Activated CD8-positive, alpha-beta T cell treated with anti-CD3 and anti-CD28 coated beads for 36 hours (primary cell): ENCODE measurements at regions of chr2 and their contacts with region 1.

Region 1: DNA sequence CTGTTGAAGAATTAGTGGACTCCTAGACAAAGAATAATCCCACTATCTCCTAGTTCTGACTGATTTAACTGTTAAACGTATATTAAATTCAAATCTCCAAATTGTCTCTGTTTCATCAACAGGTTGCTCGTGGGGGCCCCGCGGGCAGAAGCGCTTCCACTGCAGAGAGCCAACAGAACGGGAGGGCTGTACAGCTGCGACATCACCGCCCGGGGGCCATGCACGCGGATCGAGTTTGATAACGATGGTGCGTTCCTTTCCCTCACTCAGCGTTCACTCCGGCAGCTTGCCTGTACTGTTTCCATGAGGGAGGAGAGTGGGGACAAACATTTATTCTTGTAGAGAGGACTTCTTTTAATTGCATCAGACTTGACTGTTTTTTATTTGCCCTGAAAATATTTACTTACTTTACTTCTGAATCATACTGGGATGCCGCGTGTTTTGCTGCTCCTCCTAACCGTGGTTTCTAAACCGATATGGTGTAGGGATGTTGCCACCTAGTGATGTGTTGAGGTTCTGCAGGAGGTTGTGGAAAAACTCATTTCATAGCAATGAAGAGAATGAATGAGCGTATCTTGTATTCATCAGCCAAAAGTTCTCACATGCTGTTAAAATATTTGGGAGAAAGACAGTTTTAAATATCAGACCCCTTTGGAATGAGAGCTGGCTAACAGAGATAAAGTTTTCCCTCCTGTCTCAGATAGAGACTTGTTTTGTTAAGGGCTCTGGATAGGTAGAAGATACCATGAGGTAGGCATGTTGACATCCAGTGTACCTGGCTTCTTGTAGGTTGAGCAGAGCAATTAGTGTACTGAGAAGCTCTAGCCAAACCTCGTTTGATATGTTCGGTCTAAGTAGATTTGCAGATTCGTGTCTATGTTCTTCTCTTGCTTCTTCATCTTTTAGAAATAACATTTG is 38.3 kb downstream of the ITGA6 start:
- DNase-seq: peak; percentile 88
- ATAC-seq: peak; percentile 69
- H3K4me3 Mint-ChIP-seq: peak overlapping the region; percentile 39
- H3K27ac Mint-ChIP-seq: peak overlapping the region; percentile 76
- H3K4me1 Mint-ChIP-seq: peaks cover 60% of the 10 kb centered on the region
- H3K27me3 Mint-ChIP-seq: no peaks in the 10 kb centered on the region
- CTCF ChIP-seq: peak; percentile 95

Region 2: DNA sequence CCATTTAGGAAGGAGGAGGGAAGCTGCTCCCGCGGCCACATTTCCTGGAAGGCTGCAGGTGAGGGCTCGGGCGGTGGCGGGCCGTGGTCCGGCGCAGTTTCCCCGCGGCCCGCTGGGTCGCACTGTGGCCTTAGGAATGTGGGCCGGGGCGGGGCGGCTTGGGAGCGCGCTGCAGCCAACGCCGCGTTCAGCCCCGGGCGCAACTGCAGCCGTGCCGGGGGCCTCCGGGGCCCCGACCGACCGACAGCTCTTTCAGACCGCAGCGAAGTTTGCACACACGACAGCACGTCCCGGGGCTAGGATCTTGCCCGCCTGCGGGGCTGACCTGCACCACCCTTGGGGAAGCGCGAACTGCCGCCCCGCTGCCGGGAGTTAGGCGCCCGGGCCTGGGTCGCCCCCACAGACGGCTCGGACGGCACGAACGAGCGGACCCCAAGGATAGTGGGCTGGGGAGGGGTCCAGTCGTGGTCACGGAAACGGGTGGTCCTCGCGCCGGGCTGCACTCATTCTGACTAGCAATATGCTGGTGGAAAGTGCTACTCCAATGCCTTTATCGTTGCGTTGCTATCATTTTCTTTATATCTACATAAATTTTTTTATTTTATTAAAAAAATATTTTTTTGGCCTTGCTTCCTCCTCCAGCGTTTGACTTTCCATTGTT is 293.0 kb before region 1 on chr2:
- CTCF ChIA-PET with region 1: interaction called, 106 read pairs
- POLR2A ChIA-PET with region 1: no interaction called
- intact Hi-C with region 1: loop called (anchors 1 kb)
- DNase-seq: peak; percentile 70
- ATAC-seq: peak; percentile 98
- H3K4me3 Mint-ChIP-seq: peak overlapping the region; percentile 47
- H3K27ac Mint-ChIP-seq: no peak overlapping the region
- H3K4me1 Mint-ChIP-seq: peaks cover 2% of the 10 kb centered on the region
- H3K27me3 Mint-ChIP-seq: peaks cover 6% of the 10 kb centered on the region
- CTCF ChIP-seq: peak; percentile 80

Region 3: DNA sequence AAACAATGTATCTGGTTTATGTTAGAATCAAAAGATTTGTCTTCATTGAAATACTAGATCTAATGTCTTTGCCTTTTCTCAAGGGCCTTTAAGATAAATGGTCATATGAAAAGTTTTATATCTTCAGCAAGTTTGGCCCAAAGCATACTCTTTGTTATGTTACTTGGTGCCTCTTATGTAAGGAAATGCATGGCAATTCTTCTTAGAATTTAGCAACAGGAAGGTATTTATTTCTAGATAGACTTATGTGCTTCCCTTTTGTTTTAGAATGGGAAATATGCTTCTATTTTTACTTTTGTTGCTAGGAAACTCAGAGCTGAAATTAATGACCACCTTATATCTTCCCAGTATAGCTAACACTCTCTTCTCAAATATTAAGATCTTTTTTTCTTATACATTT is 245.6 kb before region 1 on chr2:
- CTCF ChIA-PET with region 1: interaction called, 15 read pairs
- POLR2A ChIA-PET with region 1: interaction called, 3 read pairs
- intact Hi-C with region 1: no loop called
- DNase-seq: no peak
- ATAC-seq: no peak
- H3K4me3 Mint-ChIP-seq: no peak overlapping the region
- H3K27ac Mint-ChIP-seq: no peak overlapping the region
- H3K4me1 Mint-ChIP-seq: peaks cover 21% of the 10 kb centered on the region
- H3K27me3 Mint-ChIP-seq: no peaks in the 10 kb centered on the region
- CTCF ChIP-seq: no peak

Region 4: DNA sequence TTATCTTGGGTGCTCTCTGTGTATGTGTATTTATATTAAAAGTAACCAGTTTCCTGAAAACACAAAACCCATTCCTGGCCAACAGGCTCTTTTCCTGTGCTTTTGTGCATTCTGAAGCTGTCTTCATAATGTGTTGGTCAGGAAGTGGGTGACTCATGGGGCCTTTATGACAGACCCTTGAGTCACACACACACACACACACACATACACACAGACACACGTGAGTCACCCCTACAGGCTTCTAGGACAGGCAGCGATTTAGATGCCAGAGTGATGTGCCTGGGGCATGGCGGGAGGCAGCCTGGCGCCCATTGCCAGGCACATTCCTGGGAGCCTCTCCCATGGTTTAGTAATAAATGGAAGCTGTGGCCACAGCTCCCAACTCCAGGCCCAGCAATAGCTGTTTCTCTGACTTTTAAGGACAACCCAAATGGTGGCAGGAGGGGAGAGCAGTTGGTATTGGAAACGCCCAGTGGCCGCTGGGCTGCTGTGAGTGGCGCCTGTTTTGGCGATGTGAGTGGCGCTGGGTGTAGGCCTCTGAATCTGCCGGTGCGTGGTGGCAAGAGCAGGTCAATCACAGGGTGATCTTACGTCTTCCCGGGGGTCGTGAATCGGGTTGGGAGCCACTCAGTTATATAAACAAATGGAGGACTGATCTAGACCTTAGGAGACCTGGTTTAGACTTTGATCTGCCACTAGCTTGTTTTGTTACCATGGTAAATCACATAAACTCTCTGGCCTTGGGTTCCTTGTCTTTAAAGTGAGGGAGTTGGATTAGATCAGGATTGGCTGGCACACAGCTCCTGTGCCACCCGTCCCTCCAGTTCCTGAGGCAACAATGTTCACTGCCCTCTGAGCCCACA is 212.3 kb before region 1 on chr2:
- CTCF ChIA-PET with region 1: interaction called, 14 read pairs
- POLR2A ChIA-PET with region 1: interaction called, 3 read pairs
- intact Hi-C with region 1: loop called (anchors 10 kb)
- DNase-seq: peak; percentile 94
- ATAC-seq: peak; percentile 98
- H3K4me3 Mint-ChIP-seq: no peak overlapping the region
- H3K27ac Mint-ChIP-seq: peak overlapping the region; percentile 70
- H3K4me1 Mint-ChIP-seq: peaks cover 40% of the 10 kb centered on the region
- H3K27me3 Mint-ChIP-seq: no peaks in the 10 kb centered on the region
- CTCF ChIP-seq: no peak

Region 5: GRCh38 chr2:172357442-172357841 is 108.2 kb before region 1 on chr2:
- CTCF ChIA-PET with region 1: interaction called, 10 read pairs
- POLR2A ChIA-PET with region 1: no interaction called
- intact Hi-C with region 1: no loop called
- DNase-seq: no peak
- ATAC-seq: no peak
- H3K4me3 Mint-ChIP-seq: no peak overlapping the region
- H3K27ac Mint-ChIP-seq: no peak overlapping the region
- H3K4me1 Mint-ChIP-seq: no peaks in the 10 kb centered on the region
- H3K27me3 Mint-ChIP-seq: no peaks in the 10 kb centered on the region
- CTCF ChIP-seq: no peak

Region 6: DNA sequence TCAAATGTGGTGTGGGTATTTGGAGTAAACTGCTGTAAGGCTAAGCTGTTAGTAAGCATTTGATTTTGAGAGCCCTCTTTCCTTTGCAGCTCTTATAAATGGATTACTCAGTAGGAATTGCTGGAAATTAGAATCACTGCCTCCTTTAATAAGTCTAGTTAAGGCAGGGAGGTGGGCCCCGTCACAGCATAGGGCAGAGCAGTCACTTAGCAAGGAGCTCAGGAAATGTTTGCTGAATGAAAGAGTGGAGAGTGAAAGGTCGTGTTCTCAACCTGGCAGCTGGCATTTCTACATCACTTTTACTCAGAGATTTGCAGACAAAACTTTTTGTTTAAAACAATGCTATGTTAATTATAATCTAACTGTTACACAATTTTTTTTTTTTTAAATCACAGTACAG is 12.8 kb before region 1 on chr2:
- CTCF ChIA-PET with region 1: interaction called, 746 read pairs
- POLR2A ChIA-PET with region 1: interaction called, 10 read pairs
- intact Hi-C with region 1: no loop called
- DNase-seq: no peak
- ATAC-seq: no peak
- H3K4me3 Mint-ChIP-seq: no peak overlapping the region
- H3K27ac Mint-ChIP-seq: no peak overlapping the region
- H3K4me1 Mint-ChIP-seq: peaks cover 72% of the 10 kb centered on the region
- H3K27me3 Mint-ChIP-seq: no peaks in the 10 kb centered on the region
- CTCF ChIP-seq: no peak

Region 7: DNA sequence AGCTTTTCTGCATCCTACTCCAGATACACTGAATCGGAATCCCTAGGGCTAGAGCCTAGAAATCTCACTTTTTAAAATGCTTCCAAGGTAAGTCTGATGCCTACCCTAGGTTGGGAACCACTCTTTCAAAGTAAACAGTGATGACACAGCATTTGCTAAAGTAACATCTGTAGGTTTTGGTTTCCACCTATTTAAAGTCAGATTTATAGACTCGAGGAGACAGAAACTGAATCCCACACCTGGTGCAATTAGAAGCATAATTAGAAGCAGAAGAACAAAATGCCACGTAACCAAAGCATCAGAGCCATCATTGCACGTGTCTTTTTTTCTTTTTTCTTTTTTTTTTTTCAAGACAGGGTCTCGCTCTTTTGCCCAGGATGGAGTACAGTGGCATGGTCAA is 131.1 kb after region 1 on chr2:
- CTCF ChIA-PET with region 1: no interaction called
- POLR2A ChIA-PET with region 1: no interaction called
- intact Hi-C with region 1: no loop called
- DNase-seq: no peak
- ATAC-seq: no peak
- H3K4me3 Mint-ChIP-seq: no peak overlapping the region
- H3K27ac Mint-ChIP-seq: no peak overlapping the region
- H3K4me1 Mint-ChIP-seq: peaks cover 16% of the 10 kb centered on the region
- H3K27me3 Mint-ChIP-seq: no peaks in the 10 kb centered on the region
- CTCF ChIP-seq: no peak